Activated naive CD4-positive, alpha-beta T cell treated with anti-CD3 and anti-CD28 coated beads for 36 hours (primary cell): ENCODE measurements at regions of chr10 and their contacts with region 1.

Region 1: GRCh38 chr10:71893920-71894319 is 42.9 kb upstream of the PSAP start:
- DNase-seq: no peak
- H3K4me3 Mint-ChIP-seq: no peak overlapping the region
- H3K27ac Mint-ChIP-seq: no peak overlapping the region
- H3K4me1 Mint-ChIP-seq: peaks cover 18% of the 10 kb centered on the region
- H3K27me3 Mint-ChIP-seq: no peaks in the 10 kb centered on the region

Region 2: GRCh38 chr10:71383972-71384687 is 509.8 kb before region 1 on chr10:
- CTCF ChIA-PET with region 1: no interaction called
- intact Hi-C with region 1: loop called (anchors 2 kb)
- DNase-seq: peak; percentile 84
- H3K4me3 Mint-ChIP-seq: no peak overlapping the region
- H3K27ac Mint-ChIP-seq: no peak overlapping the region
- H3K4me1 Mint-ChIP-seq: no peaks in the 10 kb centered on the region
- H3K27me3 Mint-ChIP-seq: no peaks in the 10 kb centered on the region

Region 3: GRCh38 chr10:71589617-71590551 is 304.0 kb before region 1 on chr10:
- CTCF ChIA-PET with region 1: no interaction called
- intact Hi-C with region 1: no loop called
- DNase-seq: no peak
- H3K4me3 Mint-ChIP-seq: no peak overlapping the region
- H3K27ac Mint-ChIP-seq: no peak overlapping the region
- H3K4me1 Mint-ChIP-seq: no peaks in the 10 kb centered on the region
- H3K27me3 Mint-ChIP-seq: no peaks in the 10 kb centered on the region

Region 4: GRCh38 chr10:71905164-71905563 is 11.2 kb after region 1 on chr10:
- CTCF ChIA-PET with region 1: interaction called, 10 read pairs
- intact Hi-C with region 1: no loop called
- DNase-seq: no peak
- H3K4me3 Mint-ChIP-seq: no peak overlapping the region
- H3K27ac Mint-ChIP-seq: no peak overlapping the region
- H3K4me1 Mint-ChIP-seq: peaks cover 2% of the 10 kb centered on the region
- H3K27me3 Mint-ChIP-seq: no peaks in the 10 kb centered on the region

Region 5: DNA sequence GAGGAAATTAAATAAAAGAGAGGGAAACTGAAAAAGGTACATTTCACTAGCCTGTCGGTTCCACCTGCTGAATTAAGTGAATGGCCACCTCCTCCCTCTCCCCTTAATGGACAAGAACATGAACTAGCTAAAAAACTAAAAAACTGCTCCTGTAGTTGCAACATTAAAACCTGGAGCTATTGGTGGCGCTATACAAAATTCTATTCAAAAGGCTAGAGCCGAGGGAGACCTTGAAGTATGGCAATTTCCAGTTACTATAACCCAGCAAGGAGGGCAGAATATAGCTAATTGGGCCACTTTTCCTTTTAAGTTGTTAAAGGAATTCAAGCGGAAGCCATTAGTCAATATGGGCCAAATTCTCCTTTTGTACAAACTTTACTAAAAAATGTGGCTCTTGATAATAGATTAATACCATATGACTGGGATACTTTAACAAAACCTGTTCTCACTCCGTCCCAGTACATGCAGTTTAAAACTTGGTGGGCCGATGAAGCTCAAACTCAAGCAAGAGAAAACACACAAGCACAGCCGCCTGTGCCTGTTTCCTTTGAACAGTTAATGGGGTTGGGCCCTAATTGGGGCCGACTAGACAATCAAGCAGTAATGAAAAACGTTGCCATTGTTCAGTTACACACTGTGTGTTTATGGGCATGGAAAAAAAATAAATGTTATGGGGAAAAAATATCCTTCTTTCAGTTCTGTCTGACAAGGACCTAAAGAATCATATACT is 63.8 kb after region 1 on chr10:
- CTCF ChIA-PET with region 1: interaction called, 17 read pairs
- intact Hi-C with region 1: no loop called
- DNase-seq: no peak
- H3K4me3 Mint-ChIP-seq: no peak overlapping the region
- H3K27ac Mint-ChIP-seq: no peak overlapping the region
- H3K4me1 Mint-ChIP-seq: no peaks in the 10 kb centered on the region
- H3K27me3 Mint-ChIP-seq: peaks cover 9% of the 10 kb centered on the region

Region 6: GRCh38 chr10:71974489-71975021 is 80.6 kb after region 1 on chr10:
- CTCF ChIA-PET with region 1: interaction called, 7 read pairs
- intact Hi-C with region 1: loop called (anchors 1 kb)
- DNase-seq: peak; percentile 65
- H3K4me3 Mint-ChIP-seq: no peak overlapping the region
- H3K27ac Mint-ChIP-seq: peak overlapping the region; percentile 38
- H3K4me1 Mint-ChIP-seq: peaks cover 38% of the 10 kb centered on the region
- H3K27me3 Mint-ChIP-seq: no peaks in the 10 kb centered on the region

Region 7: DNA sequence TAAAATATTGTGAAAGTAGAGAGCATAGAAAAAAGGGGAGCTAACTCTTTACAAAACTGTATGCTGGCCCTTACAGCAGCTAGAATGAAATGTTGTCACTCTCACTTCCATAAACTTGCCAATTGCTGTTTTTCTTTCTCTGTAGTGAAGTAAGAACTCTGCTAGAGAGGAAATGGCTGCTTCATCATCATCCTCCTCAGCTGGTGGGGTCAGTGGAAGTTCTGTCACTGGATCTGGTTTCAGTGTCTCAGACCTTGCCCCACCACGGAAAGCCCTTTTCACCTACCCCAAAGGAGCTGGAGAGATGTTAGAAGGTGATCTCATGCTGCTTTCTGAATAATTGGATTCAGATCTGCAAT is 329.8 kb after region 1 on chr10:
- CTCF ChIA-PET with region 1: interaction called, 5 read pairs
- intact Hi-C with region 1: loop called (anchors 2 kb)
- DNase-seq: peak; percentile 44
- H3K4me3 Mint-ChIP-seq: no peak overlapping the region
- H3K27ac Mint-ChIP-seq: peak overlapping the region; percentile 89
- H3K4me1 Mint-ChIP-seq: peaks cover 63% of the 10 kb centered on the region
- H3K27me3 Mint-ChIP-seq: no peaks in the 10 kb centered on the region